ENCODE measurements at regions of chr15 and their contacts with region 1.

Region 1: DNA sequence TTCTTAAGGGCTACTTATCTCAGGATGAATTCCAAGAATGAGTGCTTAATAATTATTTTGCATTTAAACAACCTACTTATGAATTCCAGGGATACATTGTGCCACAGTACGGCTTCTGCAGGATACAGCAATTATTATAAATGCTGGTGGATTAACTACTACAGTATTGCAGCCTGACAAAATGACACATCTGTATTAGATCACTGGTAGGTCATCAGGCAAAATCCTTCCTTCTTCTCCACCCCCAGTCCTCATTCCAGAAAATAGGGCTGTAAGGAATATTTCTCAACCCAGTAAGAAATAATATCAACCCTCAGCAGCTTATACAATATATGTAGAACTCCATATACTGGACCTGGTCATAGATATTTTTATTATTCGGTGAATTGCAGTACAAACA is 79.3 kb upstream of the RORA start:
- DNase-seq: no peak

Region 2: GRCh38 chr15:61282661-61283060 is 25.8 kb before region 1 on chr15:
- intact Hi-C with region 1: no loop called
- DNase-seq: no peak

Region 3: GRCh38 chr15:61337541-61337940 is 29.1 kb after region 1 on chr15:
- intact Hi-C with region 1: loop called in 1 of 2 experiments (anchors 1 kb)
- DNase-seq: no peak